Panc1 (cell line): ENCODE measurements at regions of chr3 and their contacts with region 1.

Region 1: DNA sequence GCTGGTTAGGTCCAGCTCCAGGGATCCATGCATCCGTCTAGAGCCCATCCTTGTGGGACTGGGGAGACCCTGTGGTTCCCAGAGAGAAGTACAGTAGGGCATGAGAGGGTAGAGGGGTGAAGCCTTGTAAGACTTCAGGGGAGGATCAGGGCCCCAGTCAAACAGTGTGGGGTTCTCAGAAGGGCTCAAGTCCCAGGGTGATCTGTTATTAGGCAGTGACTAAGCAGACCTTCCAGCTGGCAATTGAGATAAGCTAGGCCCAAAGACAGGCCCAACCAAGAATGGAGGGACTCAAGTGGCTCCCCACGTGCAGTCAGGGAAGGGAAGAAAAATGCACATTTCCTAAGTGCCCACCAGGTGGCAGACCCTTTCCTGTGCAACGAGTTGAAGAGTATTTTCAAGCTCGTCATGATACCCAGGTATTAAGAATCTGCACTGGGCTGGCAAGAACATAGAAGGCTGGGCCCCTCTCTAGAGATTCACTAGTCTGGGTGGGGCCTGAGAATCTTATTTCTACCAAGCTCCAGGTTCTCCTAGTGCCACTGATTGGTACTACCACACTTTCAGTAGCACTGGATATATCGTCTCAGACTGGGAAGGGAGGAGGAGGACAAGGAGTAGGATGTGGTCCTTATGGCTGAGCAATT is 240.8 kb downstream of the NR1D2 start:
- DNase-seq: peak; percentile 20
- ATAC-seq: peak; percentile 78
- H3K4me3 ChIP-seq: no peak overlapping the region
- H3K27ac ChIP-seq: no peak overlapping the region
- H3K4me1 ChIP-seq: no peaks in the 10 kb centered on the region
- H3K27me3 ChIP-seq: no peaks in the 10 kb centered on the region
- CTCF ChIP-seq: peak; percentile 74

Region 2: GRCh38 chr3:24196526-24196925 is 10.7 kb after region 1 on chr3:
- CTCF ChIA-PET with region 1: no interaction called
- POLR2A ChIA-PET with region 1: no interaction called
- in situ Hi-C with region 1: no loop called
- intact Hi-C with region 1: no loop called
- DNase-seq: no peak
- ATAC-seq: no peak
- H3K4me3 ChIP-seq: no peak overlapping the region
- H3K27ac ChIP-seq: no peak overlapping the region
- H3K4me1 ChIP-seq: no peaks in the 10 kb centered on the region
- H3K27me3 ChIP-seq: no peaks in the 10 kb centered on the region
- CTCF ChIP-seq: no peak

Region 3: DNA sequence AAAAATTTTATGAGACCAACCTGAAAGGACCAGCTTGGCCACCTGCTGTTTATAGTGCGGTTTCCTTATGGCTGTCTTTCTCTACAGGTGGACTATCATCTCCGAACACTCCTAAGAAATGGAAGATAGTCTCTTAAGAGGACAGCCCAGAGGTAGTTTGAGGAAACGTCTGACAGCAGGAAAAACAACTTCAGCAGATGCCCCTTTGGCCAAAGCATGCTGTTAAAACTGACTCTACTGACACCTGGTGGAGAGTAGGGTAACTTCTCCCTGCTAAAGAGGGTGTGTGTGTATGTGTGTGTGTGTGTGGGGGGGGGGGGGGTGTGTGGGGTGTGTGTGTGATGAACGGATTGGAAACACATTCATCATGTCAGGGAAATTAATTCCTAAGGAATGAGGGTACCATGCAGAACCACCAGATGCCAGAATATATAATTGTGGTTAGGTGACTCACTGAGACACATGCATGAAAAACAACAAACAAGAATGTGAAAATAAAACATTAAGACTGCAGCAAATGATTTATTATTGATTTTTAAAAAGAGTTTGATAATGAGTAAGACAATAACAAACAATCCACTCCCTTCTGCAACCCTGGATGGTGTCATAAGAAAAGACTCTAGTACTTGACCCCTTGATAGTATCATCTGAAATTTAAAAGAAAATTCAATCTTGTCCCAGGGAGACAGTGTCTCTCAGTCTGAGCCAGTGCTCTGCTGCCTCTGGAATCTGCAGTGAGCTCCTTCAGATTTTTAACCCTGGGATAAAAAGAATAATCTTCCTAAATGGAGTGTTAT is 52.3 kb after region 1 on chr3:
- CTCF ChIA-PET with region 1: no interaction called
- POLR2A ChIA-PET with region 1: no interaction called
- in situ Hi-C with region 1: no loop called
- intact Hi-C with region 1: loop called (anchors 5 kb)
- DNase-seq: peak; percentile 67
- ATAC-seq: peak; percentile 87
- H3K4me3 ChIP-seq: no peak overlapping the region
- H3K27ac ChIP-seq: no peak overlapping the region
- H3K4me1 ChIP-seq: peaks cover 4% of the 10 kb centered on the region; the same call in 1 of the 2 replicates
- H3K27me3 ChIP-seq: no peaks in the 10 kb centered on the region
- CTCF ChIP-seq: peak; percentile 73

Region 4: GRCh38 chr3:24299806-24300626 is 114.2 kb after region 1 on chr3:
- CTCF ChIA-PET with region 1: no interaction called
- POLR2A ChIA-PET with region 1: no interaction called
- in situ Hi-C with region 1: no loop called
- intact Hi-C with region 1: no loop called
- DNase-seq: no peak
- ATAC-seq: peak; percentile 73
- H3K4me3 ChIP-seq: no peak overlapping the region
- H3K27ac ChIP-seq: no peak overlapping the region
- H3K4me1 ChIP-seq: no peaks in the 10 kb centered on the region; the same call in 1 of the 2 replicates
- H3K27me3 ChIP-seq: no peaks in the 10 kb centered on the region
- CTCF ChIP-seq: no peak

Region 5: GRCh38 chr3:24538891-24539290 is 353.0 kb after region 1 on chr3:
- CTCF ChIA-PET with region 1: no interaction called
- POLR2A ChIA-PET with region 1: no interaction called
- in situ Hi-C with region 1: no loop called
- intact Hi-C with region 1: no loop called
- DNase-seq: no peak
- ATAC-seq: no peak
- H3K4me3 ChIP-seq: no peak overlapping the region
- H3K27ac ChIP-seq: no peak overlapping the region
- H3K4me1 ChIP-seq: no peaks in the 10 kb centered on the region
- H3K27me3 ChIP-seq: no peaks in the 10 kb centered on the region
- CTCF ChIP-seq: no peak

Region 6: DNA sequence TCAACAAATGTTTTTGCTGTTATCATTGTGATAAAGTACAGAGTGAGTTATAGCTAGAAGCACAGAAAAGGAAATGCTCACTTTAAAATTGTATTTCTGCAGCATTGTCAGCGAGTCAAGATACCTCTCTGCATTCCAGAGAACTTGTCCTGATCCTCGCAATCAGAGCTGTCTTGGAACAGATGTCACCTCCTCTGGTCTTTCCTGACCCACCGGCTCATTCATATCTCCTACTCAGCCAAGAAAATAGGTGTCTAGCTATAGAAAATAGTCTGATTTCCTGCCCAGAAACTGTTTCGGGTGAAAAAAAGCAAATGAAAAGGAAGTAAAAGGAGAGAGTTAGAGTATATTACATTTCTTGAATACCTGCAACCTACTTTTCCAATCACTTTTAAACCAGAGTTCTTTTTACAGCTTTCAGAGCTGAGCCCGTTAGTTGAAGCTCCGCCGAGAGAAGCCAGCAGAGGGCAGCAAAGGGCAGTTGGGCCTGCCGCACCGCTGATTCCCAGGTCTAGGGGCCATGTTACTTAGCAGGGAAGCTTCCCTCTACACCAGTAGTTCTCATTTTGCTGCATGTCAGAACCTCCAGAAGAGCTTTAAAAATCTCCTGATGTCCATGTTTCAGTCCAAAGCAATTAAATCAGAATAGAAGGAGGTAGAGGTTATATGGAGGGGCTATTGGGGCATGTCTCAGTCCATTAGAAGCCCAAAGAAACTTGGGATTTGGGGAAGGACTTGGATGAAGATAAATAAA is 494.5 kb after region 1 on chr3:
- CTCF ChIA-PET with region 1: no interaction called
- POLR2A ChIA-PET with region 1: no interaction called
- in situ Hi-C with region 1: no loop called
- intact Hi-C with region 1: loop called (anchors 5 kb)
- DNase-seq: peak; percentile 33
- ATAC-seq: peak; percentile 78
- H3K4me3 ChIP-seq: no peak overlapping the region
- H3K27ac ChIP-seq: no peak overlapping the region
- H3K4me1 ChIP-seq: no peaks in the 10 kb centered on the region
- H3K27me3 ChIP-seq: no peaks in the 10 kb centered on the region
- CTCF ChIP-seq: peak; percentile 87